Sciatic nerve (tissue), 2 donors: ENCODE measurements at regions of chr6 and their contacts with region 1.

Region 1: GRCh38 chr6:474453-475185 is 83.1 kb downstream of the IRF4 start:
- DNase-seq: no peak
- ATAC-seq: no peak

Region 2: GRCh38 chr6:1170794-1171193 is 696.2 kb after region 1 on chr6:
- intact Hi-C with region 1: loop called (anchors 10 kb)
- DNase-seq: no peak
- ATAC-seq: no peak